Activated CD4-positive, alpha-beta T cell treated with anti-CD3 and anti-CD28 coated beads for 36 hours (primary cell): ENCODE measurements at regions of chr12 and their contacts with region 1.

Region 1: GRCh38 chr12:123957196-123957595 is 15.4 kb downstream of the CCDC92 start:
- DNase-seq: no peak
- ATAC-seq: no peak
- H3K4me3 Mint-ChIP-seq: no peak overlapping the region
- H3K27ac Mint-ChIP-seq: no peak overlapping the region
- H3K4me1 Mint-ChIP-seq: no peaks in the 10 kb centered on the region
- H3K27me3 Mint-ChIP-seq: no peaks in the 10 kb centered on the region

Region 2: GRCh38 chr12:123938679-123939480 is 18.3 kb before region 1 on chr12:
- CTCF ChIA-PET with region 1: interaction called, 11 read pairs
- POLR2A ChIA-PET with region 1: no interaction called
- intact Hi-C with region 1: no loop called
- DNase-seq: peak; percentile 53
- ATAC-seq: peak; percentile 33
- H3K4me3 Mint-ChIP-seq: peak overlapping the region; percentile 59
- H3K27ac Mint-ChIP-seq: peak overlapping the region; percentile 85
- H3K4me1 Mint-ChIP-seq: peaks cover 21% of the 10 kb centered on the region
- H3K27me3 Mint-ChIP-seq: no peaks in the 10 kb centered on the region